H1 (cell line): ENCODE measurements at regions of chr19 and their contacts with region 1.

Region 1: DNA sequence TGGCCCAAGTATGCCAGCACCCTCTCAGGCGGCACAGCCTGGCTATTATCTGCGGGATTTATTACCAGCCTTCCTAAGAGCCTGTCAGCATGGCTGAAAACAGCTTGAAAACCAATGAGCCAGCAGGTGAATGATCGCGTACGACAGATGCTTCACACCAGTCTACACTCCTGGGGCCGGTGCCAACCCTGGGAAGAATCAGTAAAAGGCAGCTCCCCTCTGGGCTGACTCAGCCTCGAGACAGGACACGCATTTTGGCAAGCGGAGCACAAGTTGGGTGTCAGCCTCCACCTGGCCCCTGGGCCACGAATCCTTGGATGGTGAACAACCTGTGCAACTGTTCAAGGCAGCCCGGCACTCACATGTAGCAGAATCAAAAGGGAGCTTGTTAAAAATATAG is 15.6 kb downstream of the EMP3 start:
- DNase-seq: no peak
- H3K4me3 ChIP-seq: no peak overlapping the region
- H3K27ac ChIP-seq: no peak overlapping the region
- H3K4me1 ChIP-seq: peaks cover 0 to 4% (median under 1%) of the 10 kb centered on the region in 4 experiments; a peak in 2 of 7 replicates
- H3K27me3 ChIP-seq: no peaks in the 10 kb centered on the region
- CTCF ChIP-seq: no peak
- EP300 ChIP-seq: no peak
- POLR2A ChIP-seq: no peak
- RAD21 ChIP-seq: no peak

Region 2: DNA sequence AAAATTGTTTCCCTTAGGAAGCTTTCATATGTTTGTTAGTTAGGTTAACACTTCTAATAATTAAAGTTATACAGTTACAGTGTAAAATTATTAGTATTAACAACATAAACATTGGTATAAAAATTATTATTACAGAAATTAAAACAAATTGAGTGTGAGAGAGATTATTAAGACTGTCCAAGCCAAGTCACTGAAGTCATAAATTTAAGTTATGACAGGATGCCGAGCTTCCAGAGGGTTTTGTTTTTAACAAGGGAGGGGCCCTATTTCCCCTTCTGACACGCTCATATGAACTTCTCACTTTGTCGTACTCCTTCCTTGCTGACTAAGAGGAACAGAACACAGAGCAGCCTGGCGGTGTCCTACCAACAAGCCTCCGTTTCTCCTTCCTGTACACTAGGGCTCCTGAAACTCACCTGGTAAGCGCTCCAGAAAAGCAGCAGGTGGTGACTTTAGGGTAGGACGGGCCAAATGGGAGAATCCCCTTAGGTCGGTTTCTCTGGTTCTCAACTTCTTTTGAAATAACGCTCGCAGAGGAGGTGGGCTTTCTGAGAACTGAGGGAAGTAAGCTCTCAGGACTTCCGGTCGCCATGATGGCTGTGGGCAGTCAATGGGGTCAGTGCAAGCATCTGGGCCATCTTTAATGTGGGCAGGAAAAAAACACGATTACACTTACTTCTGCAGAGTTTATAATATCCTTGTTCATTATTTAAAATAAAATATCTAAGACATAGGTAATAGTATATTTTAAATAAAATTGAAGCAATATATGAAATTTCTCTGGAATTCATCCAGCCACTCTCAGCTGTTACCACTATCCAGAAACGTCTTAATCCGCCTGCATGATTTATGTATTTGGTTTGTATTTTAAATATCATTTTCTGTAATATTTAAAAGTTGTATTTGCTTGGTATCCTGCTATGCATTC is 85.4 kb before region 1 on chr19 and contains the start of gene CARD8:
- CTCF ChIA-PET with region 1: no interaction called
- POLR2A ChIA-PET with region 1: no interaction called
- DNase-seq: peak; percentile 53 to 70
- H3K4me3 ChIP-seq: peak within 1 kb of the TSS; percentile 66 to 83 (median 78)
- H3K27ac ChIP-seq: peak within 1 kb of the TSS; percentile 74
- H3K4me1 ChIP-seq: no peaks in the 10 kb centered on the region
- H3K27me3 ChIP-seq: no peaks in the 10 kb centered on the region
- CTCF ChIP-seq: no peak
- EP300 ChIP-seq: no peak
- POLR2A ChIP-seq: peak; percentile 62 to 87
- RAD21 ChIP-seq: no peak
- total RNA-seq, gene CARD8: 24.4 and 26.2 TPM in 2 replicates

Region 3: DNA sequence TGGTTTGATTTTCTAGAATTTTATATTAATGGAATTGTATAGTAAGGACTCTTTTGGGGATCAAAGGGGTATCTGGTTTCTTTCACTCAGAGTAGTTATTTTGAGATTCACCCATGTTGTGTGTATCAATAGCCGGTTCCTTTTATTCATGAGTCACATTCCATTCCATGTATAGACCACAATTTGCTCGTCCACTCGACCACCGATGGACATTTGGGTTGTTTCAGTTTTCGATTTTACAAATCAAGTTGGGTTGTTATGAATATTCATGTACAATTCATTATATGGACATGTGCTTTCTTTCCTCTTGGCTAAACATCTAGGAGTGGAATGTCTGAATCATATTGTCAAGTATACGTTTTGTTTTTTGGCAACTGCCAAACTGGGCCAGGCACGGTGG is 25.3 kb before region 1 on chr19:
- CTCF ChIA-PET with region 1: interaction called, 60 read pairs
- POLR2A ChIA-PET with region 1: no interaction called
- DNase-seq: no peak
- H3K4me3 ChIP-seq: no peak overlapping the region
- H3K27ac ChIP-seq: no peak overlapping the region
- H3K4me1 ChIP-seq: peaks cover 0 to 11% (median 4%) of the 10 kb centered on the region in 4 experiments; a peak in 5 of 7 replicates
- H3K27me3 ChIP-seq: no peaks in the 10 kb centered on the region
- CTCF ChIP-seq: no peak
- EP300 ChIP-seq: no peak
- POLR2A ChIP-seq: no peak
- RAD21 ChIP-seq: no peak

Region 4: GRCh38 chr19:48321622-48322591 is 19.1 kb before region 1 on chr19:
- CTCF ChIA-PET with region 1: interaction called, 60 read pairs
- POLR2A ChIA-PET with region 1: interaction called, 3 read pairs
- DNase-seq: peak; percentile 86 to 98
- H3K4me3 ChIP-seq: peak overlapping the region; percentile 49 to 81 (median 64)
- H3K27ac ChIP-seq: peak overlapping the region; percentile 92
- H3K4me1 ChIP-seq: peaks cover 0 to 20% (median 10%) of the 10 kb centered on the region in 4 experiments; a peak in 6 of 7 replicates
- H3K27me3 ChIP-seq: peaks cover 0 to 5% (median 2%) of the 10 kb centered on the region in 4 experiments; a peak in 1 of 7 replicates
- CTCF ChIP-seq: peak in 2 of 3 experiments; percentile 4 to 16; a peak in 1 of 4 replicates
- EP300 ChIP-seq: no peak
- POLR2A ChIP-seq: peak; percentile 66 to 92
- RAD21 ChIP-seq: no peak

Region 5: GRCh38 chr19:48351341-48351752 is 10.4 kb after region 1 on chr19:
- CTCF ChIA-PET with region 1: interaction called, 29 read pairs
- POLR2A ChIA-PET with region 1: interaction called, 3 read pairs
- DNase-seq: peak in 1 of 2 experiments; percentile 97
- H3K4me3 ChIP-seq: no peak overlapping the region
- H3K27ac ChIP-seq: no peak overlapping the region
- H3K4me1 ChIP-seq: no peaks in the 10 kb centered on the region
- H3K27me3 ChIP-seq: no peaks in the 10 kb centered on the region
- CTCF ChIP-seq: peak; percentile 84 to 98 (median 93)
- EP300 ChIP-seq: no peak
- POLR2A ChIP-seq: no peak
- RAD21 ChIP-seq: peak; percentile 66 to 72

Region 6: GRCh38 chr19:48363810-48364563 is 23.0 kb after region 1 on chr19 and contains the starts of genes SYNGR4 and TMEM143:
- CTCF ChIA-PET with region 1: no interaction called
- POLR2A ChIA-PET with region 1: no interaction called
- DNase-seq: peak; percentile 96 to 100
- H3K4me3 ChIP-seq: peak within 1 kb of the TSS; percentile 44 to 90 (median 72)
- H3K27ac ChIP-seq: peak within 1 kb of the TSS; percentile 80
- H3K4me1 ChIP-seq: peaks cover 0 to 5% (median 4%) of the 10 kb centered on the region in 4 experiments; a peak in 4 of 7 replicates
- H3K27me3 ChIP-seq: peaks cover 0 to 10% (median 2%) of the 10 kb centered on the region in 4 experiments; a peak in 3 of 7 replicates
- CTCF ChIP-seq: peak in 1 of 3 experiments; percentile 8; a peak in 1 of 4 replicates
- EP300 ChIP-seq: no peak
- POLR2A ChIP-seq: peak in 1 of 2 experiments; percentile 27; a peak in 2 of 3 replicates
- RAD21 ChIP-seq: no peak
- total RNA-seq, gene SYNGR4: 1.1 TPM in 1 of 2 replicates, not detected in the other
- total RNA-seq, gene TMEM143: 14.2 and 14.7 TPM in 2 replicates